Activated naive CD4-positive, alpha-beta T cell treated with anti-CD3 and anti-CD28 coated beads, Interleukin-2, amount 10 ng/mL, durations not matched to agents 7 days and 5 days (primary cell): ENCODE measurements at regions of chr1 and their contacts with region 1.

Region 1: DNA sequence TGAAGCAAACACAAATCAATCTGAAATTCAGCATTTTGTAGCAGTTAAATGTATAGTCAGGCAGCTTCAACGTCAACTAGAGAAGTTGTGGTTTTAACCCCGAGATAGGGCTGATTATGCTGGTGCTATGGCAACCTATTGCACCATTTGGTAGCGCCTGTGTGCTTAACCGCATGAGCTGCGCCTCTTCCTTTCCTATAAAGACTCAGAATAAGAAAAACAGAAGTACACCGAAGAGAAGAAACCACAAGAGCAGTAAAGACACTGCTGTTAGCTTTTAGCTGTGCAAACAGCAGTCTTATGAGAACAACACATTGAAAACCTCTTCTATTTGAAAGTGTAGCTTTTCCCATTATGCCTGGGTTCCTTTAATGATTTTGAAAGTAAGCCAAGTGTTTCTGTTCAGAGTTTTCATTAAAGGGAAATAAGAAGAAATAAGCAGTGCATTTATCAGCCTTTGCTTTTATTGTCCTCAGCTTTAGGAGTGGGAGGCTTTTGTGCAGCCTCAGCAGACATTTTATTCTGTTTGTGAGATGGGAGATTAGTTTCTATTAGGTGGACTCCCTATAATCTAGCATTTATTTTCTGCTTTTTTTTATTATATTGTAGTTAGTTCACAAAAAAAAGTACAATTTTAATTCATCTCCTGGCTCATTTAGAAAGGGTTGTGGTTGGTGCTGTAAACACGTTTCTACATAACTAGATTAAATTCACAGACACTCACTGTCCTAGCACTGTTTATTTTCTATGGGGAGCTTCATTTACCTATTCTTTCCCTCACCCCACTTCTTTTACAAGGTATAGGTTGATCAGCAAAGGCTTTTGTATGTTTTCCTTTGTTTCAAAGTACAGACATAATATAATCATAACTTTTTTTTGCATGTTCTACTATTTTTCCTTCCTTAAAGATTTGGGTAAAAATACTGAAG is 43.3 kb downstream of the PTPRC start:
- DNase-seq: peak; percentile 90
- H3K4me3 Mint-ChIP-seq: peak overlapping the region; percentile 68
- H3K27ac Mint-ChIP-seq: peak overlapping the region; percentile 92
- H3K4me1 Mint-ChIP-seq: peaks cover 88% of the 10 kb centered on the region
- H3K27me3 Mint-ChIP-seq: no peaks in the 10 kb centered on the region

Region 2: GRCh38 chr1:198523182-198523950 is 158.7 kb before region 1 on chr1:
- CTCF ChIA-PET with region 1: interaction called, 16 read pairs
- DNase-seq: peak; percentile 36
- H3K4me3 Mint-ChIP-seq: peak overlapping the region; percentile 76
- H3K27ac Mint-ChIP-seq: peak overlapping the region; percentile 89
- H3K4me1 Mint-ChIP-seq: peaks cover 82% of the 10 kb centered on the region
- H3K27me3 Mint-ChIP-seq: no peaks in the 10 kb centered on the region

Region 3: GRCh38 chr1:198651650-198652400 is 30.3 kb before region 1 on chr1:
- CTCF ChIA-PET with region 1: interaction called, 17 read pairs
- DNase-seq: no peak
- H3K4me3 Mint-ChIP-seq: peak overlapping the region; percentile 59
- H3K27ac Mint-ChIP-seq: peak overlapping the region; percentile 85
- H3K4me1 Mint-ChIP-seq: peaks cover 79% of the 10 kb centered on the region
- H3K27me3 Mint-ChIP-seq: no peaks in the 10 kb centered on the region

Region 4: DNA sequence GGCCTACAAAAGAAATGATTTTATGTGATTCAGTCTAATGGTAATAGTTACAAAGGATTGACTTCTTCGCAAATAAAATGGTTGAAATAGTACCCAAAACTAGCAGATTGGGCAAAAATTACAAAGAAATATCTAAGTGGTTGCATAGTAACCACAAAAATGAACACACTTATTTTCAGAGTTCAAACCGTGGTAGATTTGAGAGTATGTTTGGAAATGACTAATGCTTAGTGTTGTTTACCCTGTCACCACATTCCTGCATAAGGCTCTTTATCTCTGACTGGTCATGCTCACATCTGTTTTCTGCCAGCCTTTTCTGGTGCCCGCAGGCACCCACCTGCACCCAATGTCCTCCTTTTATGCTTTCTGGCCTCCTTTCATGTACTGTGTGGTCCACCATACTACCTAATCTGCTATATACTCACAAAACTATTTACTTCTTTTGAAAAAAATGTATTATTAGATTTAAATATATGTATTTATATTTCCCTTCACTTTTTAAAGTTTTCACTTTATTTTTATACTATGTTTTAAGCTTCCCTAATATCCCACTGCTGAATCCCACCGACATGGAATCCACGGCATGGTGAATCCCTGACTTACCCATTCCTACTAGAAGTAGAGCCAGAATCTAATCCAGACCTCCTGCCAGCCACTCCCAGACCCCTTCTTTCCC is 12.9 kb before region 1 on chr1:
- CTCF ChIA-PET with region 1: interaction called, 10 read pairs
- DNase-seq: peak; percentile 54
- H3K4me3 Mint-ChIP-seq: peak overlapping the region; percentile 55
- H3K27ac Mint-ChIP-seq: peak overlapping the region; percentile 89
- H3K4me1 Mint-ChIP-seq: peaks cover 89% of the 10 kb centered on the region
- H3K27me3 Mint-ChIP-seq: no peaks in the 10 kb centered on the region

Region 5: GRCh38 chr1:198967566-198967965 is 285.5 kb after region 1 on chr1:
- CTCF ChIA-PET with region 1: no interaction called
- DNase-seq: no peak
- H3K4me3 Mint-ChIP-seq: no peak overlapping the region
- H3K27ac Mint-ChIP-seq: no peak overlapping the region
- H3K4me1 Mint-ChIP-seq: peaks cover 58% of the 10 kb centered on the region
- H3K27me3 Mint-ChIP-seq: no peaks in the 10 kb centered on the region

Region 6: DNA sequence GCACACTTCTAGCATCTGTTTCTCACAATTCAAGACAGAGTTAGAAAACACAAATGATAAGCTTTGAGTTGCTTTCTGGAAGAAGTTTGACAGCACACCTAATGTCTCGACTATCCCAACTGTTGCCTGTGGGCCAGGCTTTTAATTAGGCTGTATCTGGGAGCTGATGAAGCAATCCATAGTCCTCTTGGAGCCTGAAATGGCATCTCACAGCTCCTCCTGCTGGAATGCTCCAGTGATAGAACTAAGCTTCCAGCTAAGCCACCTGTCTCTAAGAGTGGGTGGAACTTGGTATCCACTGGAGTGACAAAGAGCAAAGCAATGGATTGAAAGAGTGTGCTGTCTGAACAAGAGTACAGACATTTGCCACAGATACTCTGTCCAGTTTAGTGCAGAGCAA is 740.1 kb after region 1 on chr1:
- CTCF ChIA-PET with region 1: no interaction called
- DNase-seq: no peak
- H3K4me3 Mint-ChIP-seq: no peak overlapping the region
- H3K27ac Mint-ChIP-seq: no peak overlapping the region
- H3K4me1 Mint-ChIP-seq: no peaks in the 10 kb centered on the region
- H3K27me3 Mint-ChIP-seq: no peaks in the 10 kb centered on the region